Activated CD4-positive, alpha-beta T cell treated with anti-CD3 and anti-CD28 coated beads, Interleukin-2, amount 10 ng/mL, durations not matched to agents 24 days and 14 days (primary cell): ENCODE measurements at regions of chr1 and their contacts with region 1.

Region 1: GRCh38 chr1:231376875-231377549 is 38.9 kb downstream of the SPRTN start:
- DNase-seq: peak; percentile 72
- H3K4me3 Mint-ChIP-seq: peak overlapping the region; percentile 17
- H3K27ac Mint-ChIP-seq: peak overlapping the region; percentile 76
- H3K4me1 Mint-ChIP-seq: peaks cover 28% of the 10 kb centered on the region
- H3K27me3 Mint-ChIP-seq: no peaks in the 10 kb centered on the region

Region 2: DNA sequence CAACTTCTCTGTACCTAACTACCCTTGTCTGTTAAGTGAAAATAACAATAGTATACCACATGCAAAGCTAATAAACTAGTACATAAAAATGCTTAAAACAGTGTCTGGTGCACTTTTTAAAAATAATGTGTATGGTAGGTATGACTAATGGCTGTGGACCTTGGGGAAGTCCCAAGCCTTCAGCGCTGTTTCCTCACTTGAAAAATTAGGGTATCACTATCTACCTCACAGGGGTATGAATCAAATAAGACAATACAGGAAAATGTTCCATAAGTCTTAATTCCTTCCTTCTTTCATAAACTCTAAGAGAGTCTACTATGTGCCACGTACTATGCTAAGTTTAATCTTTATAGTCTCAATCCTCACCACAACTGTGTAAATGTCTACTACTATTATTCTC is 13.1 kb after region 1 on chr1:
- intact Hi-C with region 1: loop called (anchors 1 kb)
- DNase-seq: no peak
- H3K4me3 Mint-ChIP-seq: peak overlapping the region; percentile 39
- H3K27ac Mint-ChIP-seq: peak overlapping the region; percentile 50
- H3K4me1 Mint-ChIP-seq: peaks cover 35% of the 10 kb centered on the region
- H3K27me3 Mint-ChIP-seq: no peaks in the 10 kb centered on the region

Region 3: GRCh38 chr1:231460614-231461013 is 83.6 kb after region 1 on chr1:
- intact Hi-C with region 1: loop called (anchors 2 kb)
- DNase-seq: peak; percentile 92
- H3K4me3 Mint-ChIP-seq: no peak overlapping the region
- H3K27ac Mint-ChIP-seq: peak overlapping the region; percentile 66
- H3K4me1 Mint-ChIP-seq: peaks cover 35% of the 10 kb centered on the region
- H3K27me3 Mint-ChIP-seq: peaks cover 69% of the 10 kb centered on the region

Region 4: GRCh38 chr1:231512147-231512698 is 135.2 kb after region 1 on chr1:
- intact Hi-C with region 1: no loop called
- DNase-seq: no peak
- H3K4me3 Mint-ChIP-seq: no peak overlapping the region
- H3K27ac Mint-ChIP-seq: no peak overlapping the region
- H3K4me1 Mint-ChIP-seq: peaks cover 6% of the 10 kb centered on the region
- H3K27me3 Mint-ChIP-seq: peaks cover 25% of the 10 kb centered on the region